Adrenal gland (tissue), 19 donors: ENCODE measurements at regions of chr1 and their contacts with region 1.

Region 1: GRCh38 chr1:41416552-41417334 is 55.5 kb downstream of the FOXO6 start:
- DNase-seq: peak; percentile 67 to 85 (median 73)
- H3K4me3 ChIP-seq: no peak overlapping the region
- H3K27ac ChIP-seq: no peak overlapping the region
- H3K4me1 ChIP-seq: peaks cover 0 to 6% of the 10 kb centered on the region in 2 donors
- H3K27me3 ChIP-seq: no peaks in the 10 kb centered on the region
- CTCF ChIP-seq: peak; percentile 85 to 96 (median 92)
- POLR2A ChIP-seq: no peak

Region 2: DNA sequence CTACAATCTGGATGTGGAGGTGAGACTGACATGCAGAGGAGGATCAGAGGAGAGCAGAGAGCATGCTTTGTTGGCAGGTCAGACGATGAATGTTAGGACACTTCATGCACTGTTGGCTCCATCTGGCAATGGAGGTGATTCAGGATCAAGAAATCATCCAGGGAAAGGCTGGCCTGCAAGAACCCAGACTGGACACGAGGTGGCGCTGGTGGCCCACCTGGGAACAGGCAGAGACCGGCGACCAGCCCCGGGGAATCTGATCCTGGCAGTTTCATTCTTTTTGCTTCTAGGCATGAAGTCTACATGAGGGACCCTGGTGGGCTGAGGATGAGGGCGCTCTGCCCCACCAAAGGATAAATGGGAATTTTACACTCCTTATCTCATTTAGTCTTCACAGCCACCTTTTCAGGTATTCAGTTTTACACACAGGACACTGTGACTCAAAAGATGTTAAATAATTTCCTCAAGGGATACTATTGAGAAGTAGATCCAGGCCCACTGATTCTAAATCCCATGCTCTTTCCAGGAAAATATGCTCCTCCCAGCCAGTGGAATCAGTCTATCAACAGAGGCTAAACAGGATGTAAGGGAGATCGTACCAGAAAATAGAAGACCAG is 148.5 kb before region 1 on chr1:
- intact Hi-C with region 1: loop called in 1 of 2 experiments (anchors 5 kb)
- DNase-seq: peak; percentile 75 to 92 (median 85)
- H3K4me3 ChIP-seq: no peak overlapping the region
- H3K27ac ChIP-seq: no peak overlapping the region
- H3K4me1 ChIP-seq: peaks cover 0 to 4% of the 10 kb centered on the region in 2 donors
- H3K27me3 ChIP-seq: no peaks in the 10 kb centered on the region
- CTCF ChIP-seq: peak; percentile 96 to 99 (median 98)
- POLR2A ChIP-seq: no peak

Region 3: GRCh38 chr1:41282679-41283317 is 133.9 kb before region 1 on chr1:
- intact Hi-C with region 1: loop called (anchors 2 to 5 kb)
- DNase-seq: peak; percentile 27 to 59 (median 47)
- H3K4me3 ChIP-seq: no peak overlapping the region
- H3K27ac ChIP-seq: no peak overlapping the region
- H3K4me1 ChIP-seq: peaks cover 6 to 10% of the 10 kb centered on the region in 2 donors
- H3K27me3 ChIP-seq: no peaks in the 10 kb centered on the region
- CTCF ChIP-seq: peak; percentile 67 to 83 (median 76)
- POLR2A ChIP-seq: no peak

Region 4: GRCh38 chr1:41322835-41323627 is 93.7 kb before region 1 on chr1:
- intact Hi-C with region 1: loop called in 1 of 2 experiments (anchors 5 kb)
- DNase-seq: peak in 1 of 7 donors; percentile 29
- H3K4me3 ChIP-seq: no peak overlapping the region
- H3K27ac ChIP-seq: no peak overlapping the region
- H3K4me1 ChIP-seq: peaks cover 17 to 18% of the 10 kb centered on the region in 2 donors
- H3K27me3 ChIP-seq: no peaks in the 10 kb centered on the region
- CTCF ChIP-seq: peak in 4 of 6 experiments; percentile 12 to 27 (median 23)
- POLR2A ChIP-seq: no peak

Region 5: DNA sequence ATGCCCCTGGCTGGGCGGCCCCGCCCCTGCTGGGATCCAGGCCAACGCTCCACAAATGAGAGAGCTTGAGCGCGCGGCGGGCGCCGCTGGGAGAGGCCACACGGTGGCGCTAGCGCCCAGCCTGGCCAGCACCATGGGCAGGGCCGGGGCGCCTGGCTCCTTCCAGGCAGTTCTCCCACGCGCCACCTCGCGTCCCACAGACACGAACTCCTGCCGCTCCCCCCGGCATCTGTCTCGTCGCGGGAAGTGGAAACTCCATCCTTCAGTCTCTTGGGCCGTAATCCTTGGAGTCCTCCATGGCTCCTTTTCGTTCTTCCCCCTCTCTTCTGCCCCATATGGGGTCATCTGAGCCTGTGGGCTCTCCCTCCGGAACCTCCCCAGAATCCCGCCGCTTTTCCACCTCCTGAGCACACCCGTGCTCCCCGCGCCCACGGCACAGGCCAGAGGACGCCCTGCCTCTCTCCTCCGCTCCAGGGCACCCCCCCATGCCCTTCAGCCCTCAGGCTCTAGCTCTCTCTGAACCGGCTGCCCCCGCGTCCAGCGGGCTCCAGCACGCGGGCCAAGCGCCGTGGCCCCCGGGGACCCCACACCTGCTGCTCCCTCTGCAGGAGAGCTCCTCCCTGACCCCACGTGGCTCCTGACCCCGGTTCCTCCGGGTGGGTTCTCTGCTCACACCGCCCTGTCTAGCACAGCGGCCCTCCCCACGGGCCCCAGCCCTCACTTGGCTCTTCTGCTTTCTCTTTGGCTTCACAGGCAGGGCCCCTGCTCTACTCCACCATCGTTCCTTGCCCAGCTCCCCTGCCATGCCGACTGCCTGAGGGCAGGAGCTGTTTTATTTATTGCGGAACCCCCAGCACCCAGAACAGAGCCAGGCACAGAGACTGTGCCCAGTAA is 99.7 kb after region 1 on chr1:
- intact Hi-C with region 1: no loop called
- DNase-seq: peak; percentile 86 to 96 (median 91)
- H3K4me3 ChIP-seq: peak overlapping the region in 2 of 4 donors; percentile 36 to 58
- H3K27ac ChIP-seq: peak overlapping the region in 1 of 5 donors; percentile 34
- H3K4me1 ChIP-seq: peaks cover 5 to 16% of the 10 kb centered on the region in 2 donors
- H3K27me3 ChIP-seq: no peaks in the 10 kb centered on the region
- CTCF ChIP-seq: peak; percentile 55 to 94 (median 90)
- POLR2A ChIP-seq: no peak